ENCODE measurements at regions of chr19 and their contacts with region 1.

Region 1: DNA sequence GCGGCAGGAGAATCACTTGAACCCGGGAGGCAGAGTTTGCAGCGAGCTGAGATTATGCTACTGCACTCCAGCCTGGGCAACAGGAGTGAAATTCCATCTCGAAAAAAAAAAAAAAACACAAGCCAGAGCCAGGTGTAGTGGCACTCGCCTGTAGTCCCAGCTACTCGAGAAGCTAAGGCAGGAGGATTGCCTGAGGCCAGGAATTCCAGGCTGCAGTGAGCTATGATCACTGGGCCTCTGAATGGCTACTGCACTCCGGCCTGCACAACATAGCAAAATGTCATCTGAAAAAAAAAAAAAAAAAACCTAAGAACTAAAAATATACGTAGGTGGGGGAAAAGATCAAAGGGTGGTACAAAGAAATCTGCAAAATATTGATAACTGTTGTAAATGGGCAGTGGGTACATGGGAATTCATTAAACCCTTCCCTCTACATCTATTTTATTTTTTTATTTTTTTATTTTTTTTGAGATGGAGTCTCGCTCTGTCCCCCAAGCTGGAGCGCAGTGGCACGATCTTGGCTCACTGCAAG is 19.4 kb downstream of the EPS15L1 start:
- DNase-seq: no peak
- ATAC-seq: no peak
- H3K4me3 ChIP-seq: no peak overlapping the region
- H3K27ac ChIP-seq: no peak overlapping the region
- H3K4me1 ChIP-seq: peaks cover 10% of the 10 kb centered on the region
- H3K27me3 ChIP-seq: no peaks in the 10 kb centered on the region
- CTCF ChIP-seq: no peak

Region 2: DNA sequence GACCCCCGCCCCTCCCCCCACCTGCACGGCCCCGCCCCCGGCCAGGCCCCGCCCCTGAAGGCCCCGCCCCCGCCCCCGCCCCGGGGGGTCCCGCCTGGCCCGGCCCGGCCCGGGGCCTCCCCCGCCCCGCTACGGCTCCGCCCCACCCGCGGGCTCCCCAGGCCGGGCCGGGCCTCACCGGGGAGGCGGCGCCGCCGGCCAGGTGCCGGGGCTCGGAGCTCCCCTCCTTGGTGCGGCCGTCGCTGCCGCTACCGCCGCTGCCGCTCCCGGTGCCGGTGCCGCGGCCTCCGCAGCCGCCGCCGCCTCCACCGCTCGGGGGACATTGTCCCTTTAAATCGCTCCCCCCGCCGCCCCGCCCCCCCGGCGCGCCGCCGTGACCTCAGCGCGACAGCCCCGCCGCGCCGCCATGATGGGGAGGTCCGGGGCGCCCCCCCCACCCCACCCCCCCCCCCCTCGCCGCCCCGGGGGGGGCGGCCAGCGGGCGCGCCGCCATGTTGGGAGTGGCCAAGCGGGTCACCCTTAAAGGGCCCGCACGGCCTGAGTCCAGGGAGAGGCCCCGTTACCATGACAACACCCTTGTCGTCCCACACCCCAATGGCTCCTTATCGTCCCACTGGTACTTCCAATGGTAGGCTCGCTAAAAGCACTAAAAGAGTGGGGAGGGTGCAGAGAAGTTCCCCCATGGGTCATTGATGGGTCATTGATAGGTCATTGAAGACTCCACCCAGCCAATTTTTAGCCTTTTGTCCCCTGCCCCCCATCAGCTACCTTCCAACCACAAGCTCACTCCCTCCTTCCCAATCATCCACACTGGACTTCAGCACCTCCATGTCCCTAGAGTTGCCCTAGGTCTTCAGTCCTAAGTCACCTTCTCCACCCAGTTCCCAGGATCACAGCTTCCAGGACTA is 1002.5 kb before region 1 on chr19 and contains the start of gene WIZ:
- CTCF ChIA-PET with region 1: no interaction called
- POLR2A ChIA-PET with region 1: interaction called, 15 read pairs
- in situ Hi-C with region 1: no loop called
- intact Hi-C with region 1: no loop called
- DNase-seq: no peak
- ATAC-seq: peak; percentile 80
- H3K4me3 ChIP-seq: peak within 1 kb of the TSS; percentile 47 to 54
- H3K27ac ChIP-seq: 0 out of 2 replicates have a peak within 1 kb of the TSS, but pooled peaks have one; percentile 69
- H3K4me1 ChIP-seq: no peaks in the 10 kb centered on the region; the same call in 1 of the 2 replicates
- H3K27me3 ChIP-seq: no peaks in the 10 kb centered on the region
- CTCF ChIP-seq: no peak
- total RNA-seq, gene WIZ: 41.9 TPM